Heart left ventricle (tissue), 16 donors: ENCODE measurements at regions of chr4 and their contacts with region 1.

Region 1: GRCh38 chr4:84915396-84915780 is 51.1 kb downstream of the WDFY3 start:
- DNase-seq: no peak
- ATAC-seq: no peak
- H3K4me3 ChIP-seq: no peak overlapping the region
- H3K27ac ChIP-seq: peak overlapping the region in 1 of 12 donors; percentile 17
- H3K4me1 ChIP-seq: peaks cover 0 to 60% (median 33%) of the 10 kb centered on the region in 12 donors
- H3K27me3 ChIP-seq: no peaks in the 10 kb centered on the region
- CTCF ChIP-seq: no peak
- POLR2A ChIP-seq: no peak

Region 2: DNA sequence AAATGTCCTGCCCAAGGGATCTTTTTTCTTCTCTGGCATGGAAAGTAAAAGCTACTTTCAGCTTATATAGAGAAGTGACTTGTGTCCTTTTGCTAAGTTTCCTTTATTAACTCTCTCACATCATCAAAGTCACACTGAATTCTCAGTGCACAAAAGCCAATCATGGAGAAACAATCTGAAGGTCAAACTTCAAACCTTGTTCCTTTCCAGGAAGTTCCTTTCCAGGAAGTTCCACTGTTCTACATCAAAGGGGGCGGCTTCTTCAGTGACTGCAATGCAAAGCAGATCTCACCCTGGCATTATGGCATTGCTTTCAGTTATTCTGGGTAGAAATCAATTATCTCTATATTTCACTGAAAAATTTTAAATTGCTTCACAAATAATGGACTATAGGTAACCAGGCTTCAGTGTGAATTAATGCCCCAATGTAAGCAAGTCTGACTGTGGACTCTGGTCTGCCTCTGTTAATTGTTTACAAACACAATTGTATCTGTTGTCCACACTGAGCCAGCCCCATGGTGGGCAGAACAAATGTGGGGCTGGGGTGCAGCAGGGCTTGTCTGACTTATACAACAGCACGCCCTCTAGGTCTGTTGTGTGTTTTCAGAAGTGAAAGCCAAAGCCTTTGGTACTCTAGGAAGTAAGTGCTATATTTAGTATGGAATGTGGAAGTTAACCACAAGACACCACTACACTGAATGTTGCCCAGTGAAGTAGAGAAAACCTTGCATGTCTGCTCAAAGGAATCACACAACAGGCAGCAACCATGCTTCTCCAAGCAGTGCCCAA is 233.7 kb before region 1 on chr4:
- intact Hi-C with region 1: no loop called
- DNase-seq: peak in 1 of 5 donors; percentile 27
- ATAC-seq: peak; percentile 88 to 91 (median 89)
- H3K4me3 ChIP-seq: no peak overlapping the region
- H3K27ac ChIP-seq: peak overlapping the region in 9 of 12 donors; percentile 29 to 76 (median 55)
- H3K4me1 ChIP-seq: peaks cover 5 to 33% (median 16%) of the 10 kb centered on the region in 12 donors
- H3K27me3 ChIP-seq: no peaks in the 10 kb centered on the region
- CTCF ChIP-seq: peak in 2 of 12 donors; percentile 12 to 35
- POLR2A ChIP-seq: no peak

Region 3: GRCh38 chr4:84937381-84937977 is 22.1 kb after region 1 on chr4:
- intact Hi-C with region 1: loop called in 1 of 10 experiments (anchors 2 kb)
- DNase-seq: no peak
- ATAC-seq: peak in 3 of 4 donors; percentile 15 to 56 (median 47)
- H3K4me3 ChIP-seq: no peak overlapping the region
- H3K27ac ChIP-seq: peak overlapping the region in 11 of 12 donors; percentile 17 to 73 (median 49)
- H3K4me1 ChIP-seq: peaks cover 5 to 41% (median 33%) of the 10 kb centered on the region in 12 donors
- H3K27me3 ChIP-seq: no peaks in the 10 kb centered on the region
- CTCF ChIP-seq: no peak
- POLR2A ChIP-seq: no peak

Region 4: GRCh38 chr4:84944947-84945346 is 29.6 kb after region 1 on chr4:
- intact Hi-C with region 1: loop called in 1 of 10 experiments (anchors 1 kb)
- DNase-seq: no peak
- ATAC-seq: peak in 2 of 4 donors; percentile 33 to 54
- H3K4me3 ChIP-seq: no peak overlapping the region
- H3K27ac ChIP-seq: no peak overlapping the region
- H3K4me1 ChIP-seq: peaks cover 0 to 42% (median 23%) of the 10 kb centered on the region in 12 donors
- H3K27me3 ChIP-seq: no peaks in the 10 kb centered on the region
- CTCF ChIP-seq: no peak
- POLR2A ChIP-seq: no peak

Region 5: DNA sequence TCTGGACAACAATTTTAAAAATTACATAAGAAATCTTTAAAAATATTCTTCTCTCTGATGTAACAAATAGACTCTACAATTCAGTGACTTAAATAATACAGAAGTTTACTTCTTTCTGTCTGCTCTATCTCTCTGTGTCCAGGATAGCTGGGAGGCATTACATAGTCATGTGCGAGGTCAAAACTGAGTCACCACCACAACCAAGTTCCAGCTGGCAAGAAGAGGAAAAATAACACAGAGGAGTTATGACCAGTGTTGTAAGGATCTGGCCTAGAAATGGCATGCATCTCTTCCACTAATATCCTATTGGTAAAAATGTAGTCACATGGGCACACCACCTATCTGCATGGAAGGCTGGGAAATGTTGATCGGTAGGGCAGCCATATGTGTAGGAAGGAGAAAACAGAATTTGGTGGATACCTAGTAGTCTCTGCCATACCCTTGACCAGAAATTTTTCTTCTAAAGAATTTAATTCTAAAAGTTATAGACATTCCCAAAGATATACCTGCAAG is 90.5 kb after region 1 on chr4:
- intact Hi-C with region 1: no loop called
- DNase-seq: no peak
- ATAC-seq: peak in 3 of 4 donors; percentile 28 to 80 (median 57)
- H3K4me3 ChIP-seq: no peak overlapping the region
- H3K27ac ChIP-seq: no peak overlapping the region
- H3K4me1 ChIP-seq: no peaks in the 10 kb centered on the region
- H3K27me3 ChIP-seq: no peaks in the 10 kb centered on the region
- CTCF ChIP-seq: no peak
- POLR2A ChIP-seq: no peak